ENCODE measurements at regions of chr18 and their contacts with region 1.

Region 1: DNA sequence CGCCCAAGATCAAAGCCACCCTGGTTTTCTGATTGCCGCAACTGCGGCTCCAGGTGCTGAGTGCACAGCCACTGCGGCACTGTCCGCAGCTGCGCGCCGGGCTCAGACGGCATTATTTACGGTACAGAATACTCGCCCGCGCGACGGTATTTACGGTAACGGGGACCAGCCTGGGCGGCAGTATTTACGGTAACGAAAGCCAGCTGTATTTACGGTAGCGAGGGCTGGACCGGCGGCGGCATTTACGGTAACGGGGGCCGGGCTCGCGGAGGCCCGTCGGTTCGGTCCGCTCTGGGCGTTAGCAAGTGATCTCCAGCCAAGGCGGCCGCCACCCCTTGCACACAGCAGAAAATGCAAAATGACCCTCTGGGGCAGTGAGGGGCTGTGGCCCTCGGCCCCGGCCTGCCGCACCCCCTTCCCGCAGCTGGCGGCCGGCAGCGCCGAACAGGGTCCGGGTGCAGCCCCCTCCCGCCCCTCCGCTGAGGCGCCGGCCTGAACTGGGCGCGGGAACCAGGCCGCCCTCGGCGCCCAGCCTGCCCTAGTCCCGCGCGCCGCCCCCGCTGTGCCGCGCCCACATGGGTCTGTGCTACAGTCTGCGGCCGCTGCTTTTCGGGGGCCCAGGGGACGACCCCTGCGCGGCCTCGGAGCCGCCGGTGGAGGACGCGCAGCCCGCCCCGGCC is at the start of gene GNAL:
- DNase-seq: peak; percentile 1 to 44 (median 25)
- H3K4me3 ChIP-seq: peak within 1 kb of the TSS in 1 of 3 experiments; percentile 47
- H3K4me3 Mint-ChIP-seq: peak within 1 kb of the TSS; percentile 53 to 84
- H3K27ac ChIP-seq: no peak within 1 kb of the TSS
- H3K27ac Mint-ChIP-seq: no peak within 1 kb of the TSS
- H3K4me1 ChIP-seq: peaks cover 2 to 13% of the 10 kb centered on the region in 2 donors
- H3K4me1 Mint-ChIP-seq: peaks cover 7% of the 10 kb centered on the region
- H3K27me3 ChIP-seq: peaks cover 43 to 63% of the 10 kb centered on the region in 2 donors
- H3K27me3 Mint-ChIP-seq: peaks cover 40 to 69% (median 49%) of the 10 kb centered on the region in 3 donors
- CTCF ChIP-seq: no peak
- polyA plus RNA-seq, gene GNAL: 0.01 to 0.03 TPM in 2 of 3 donors, not detected in the other

Region 2: DNA sequence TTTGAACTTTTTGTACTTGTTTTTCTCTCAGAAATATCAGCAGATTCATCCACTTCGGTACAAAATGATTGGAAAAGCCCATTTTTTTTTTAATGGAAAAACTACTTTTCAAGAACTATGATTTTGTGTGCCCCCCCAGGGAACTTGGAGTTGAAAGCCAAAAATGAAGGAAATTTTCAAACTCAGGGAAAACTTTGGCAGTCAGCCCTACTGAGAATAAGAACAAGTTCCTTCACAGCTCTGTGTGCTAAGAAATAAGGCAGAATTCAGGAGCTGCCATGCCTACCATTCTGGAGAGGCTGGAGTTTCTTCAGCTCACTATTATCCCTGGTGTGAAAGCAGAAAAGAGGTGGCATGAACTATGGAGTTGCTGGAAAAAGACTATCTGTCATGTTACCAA is 305.7 kb before region 1 on chr18:
- intact Hi-C with region 1: no loop called
- DNase-seq: no peak
- H3K4me3 ChIP-seq: no peak overlapping the region
- H3K4me3 Mint-ChIP-seq: no peak overlapping the region
- H3K27ac ChIP-seq: no peak overlapping the region
- H3K27ac Mint-ChIP-seq: no peak overlapping the region
- H3K4me1 ChIP-seq: no peaks in the 10 kb centered on the region
- H3K4me1 Mint-ChIP-seq: no peaks in the 10 kb centered on the region
- H3K27me3 ChIP-seq: no peaks in the 10 kb centered on the region
- H3K27me3 Mint-ChIP-seq: no peaks in the 10 kb centered on the region
- CTCF ChIP-seq: no peak

Region 3: GRCh38 chr18:11741505-11742145 is 52.5 kb after region 1 on chr18:
- intact Hi-C with region 1: loop called in 1 of 2 experiments (anchors 10 kb)
- DNase-seq: peak in 1 of 3 donors; percentile 2
- H3K4me3 ChIP-seq: no peak overlapping the region
- H3K4me3 Mint-ChIP-seq: no peak overlapping the region
- H3K27ac ChIP-seq: no peak overlapping the region
- H3K27ac Mint-ChIP-seq: no peak overlapping the region
- H3K4me1 ChIP-seq: no peaks in the 10 kb centered on the region
- H3K4me1 Mint-ChIP-seq: no peaks in the 10 kb centered on the region
- H3K27me3 ChIP-seq: peaks cover 8 to 10% of the 10 kb centered on the region in 2 donors
- H3K27me3 Mint-ChIP-seq: peaks cover 17 to 26% (median 23%) of the 10 kb centered on the region in 3 donors
- CTCF ChIP-seq: peak; percentile 77

Region 4: GRCh38 chr18:11808001-11808855 is 119.1 kb after region 1 on chr18:
- intact Hi-C with region 1: no loop called
- DNase-seq: no peak
- H3K4me3 ChIP-seq: no peak overlapping the region
- H3K4me3 Mint-ChIP-seq: no peak overlapping the region
- H3K27ac ChIP-seq: no peak overlapping the region
- H3K27ac Mint-ChIP-seq: no peak overlapping the region
- H3K4me1 ChIP-seq: no peaks in the 10 kb centered on the region
- H3K4me1 Mint-ChIP-seq: no peaks in the 10 kb centered on the region
- H3K27me3 ChIP-seq: peaks cover 0 to 3% of the 10 kb centered on the region in 2 donors
- H3K27me3 Mint-ChIP-seq: peaks cover 5 to 17% (median 7%) of the 10 kb centered on the region in 3 donors
- CTCF ChIP-seq: no peak

Region 5: GRCh38 chr18:12113999-12114646 is 425.0 kb after region 1 on chr18:
- intact Hi-C with region 1: no loop called
- DNase-seq: no peak
- H3K4me3 ChIP-seq: no peak overlapping the region
- H3K4me3 Mint-ChIP-seq: no peak overlapping the region
- H3K27ac ChIP-seq: no peak overlapping the region
- H3K27ac Mint-ChIP-seq: no peak overlapping the region
- H3K4me1 ChIP-seq: no peaks in the 10 kb centered on the region
- H3K4me1 Mint-ChIP-seq: no peaks in the 10 kb centered on the region
- H3K27me3 ChIP-seq: no peaks in the 10 kb centered on the region
- H3K27me3 Mint-ChIP-seq: peaks cover 3 to 9% (median 5%) of the 10 kb centered on the region in 3 donors
- CTCF ChIP-seq: no peak

Measured in CD14-positive monocyte (primary cell).